Natural killer cell (primary cell): ENCODE measurements at regions of chr7 and their contacts with region 1.

Region 1: GRCh38 chr7:50632561-50633413 is 67.6 kb upstream of the DDC start:
- DNase-seq: peak; percentile 56 to 80
- ATAC-seq: peak; percentile 87 to 95 (median 92)
- H3K4me3 ChIP-seq: no peak overlapping the region
- H3K4me3 Mint-ChIP-seq: no peak overlapping the region
- H3K27ac ChIP-seq: no peak overlapping the region
- H3K27ac Mint-ChIP-seq: no peak overlapping the region
- H3K4me1 ChIP-seq: no peaks in the 10 kb centered on the region
- H3K4me1 Mint-ChIP-seq: no peaks in the 10 kb centered on the region
- H3K27me3 ChIP-seq: peaks cover 2% of the 10 kb centered on the region
- H3K27me3 Mint-ChIP-seq: peaks cover 24 to 31% of the 10 kb centered on the region in 2 donors
- CTCF ChIP-seq: peak; percentile 96

Region 2: GRCh38 chr7:50467817-50468610 is 164.8 kb before region 1 on chr7:
- intact Hi-C with region 1: loop called (anchors 1 kb)
- DNase-seq: peak; percentile 66 to 89
- ATAC-seq: peak; percentile 87 to 98 (median 97)
- H3K4me3 ChIP-seq: no peak overlapping the region
- H3K4me3 Mint-ChIP-seq: no peak overlapping the region
- H3K27ac ChIP-seq: no peak overlapping the region
- H3K27ac Mint-ChIP-seq: peak overlapping the region in 1 of 2 donors; percentile 42
- H3K4me1 ChIP-seq: peaks cover 9% of the 10 kb centered on the region
- H3K4me1 Mint-ChIP-seq: peaks cover 0 to 11% of the 10 kb centered on the region in 2 donors
- H3K27me3 ChIP-seq: no peaks in the 10 kb centered on the region
- H3K27me3 Mint-ChIP-seq: peaks cover 10 to 12% of the 10 kb centered on the region in 2 donors
- CTCF ChIP-seq: peak; percentile 85

Region 3: GRCh38 chr7:50595491-50596102 is 37.2 kb before region 1 on chr7:
- intact Hi-C with region 1: loop called (anchors 5 kb)
- DNase-seq: peak in 1 of 2 donors; percentile 55
- ATAC-seq: peak in 2 of 3 donors; percentile 40
- H3K4me3 ChIP-seq: no peak overlapping the region
- H3K4me3 Mint-ChIP-seq: no peak overlapping the region
- H3K27ac ChIP-seq: no peak overlapping the region
- H3K27ac Mint-ChIP-seq: no peak overlapping the region
- H3K4me1 ChIP-seq: no peaks in the 10 kb centered on the region
- H3K4me1 Mint-ChIP-seq: no peaks in the 10 kb centered on the region
- H3K27me3 ChIP-seq: no peaks in the 10 kb centered on the region
- H3K27me3 Mint-ChIP-seq: peaks cover 6 to 10% of the 10 kb centered on the region in 2 donors
- CTCF ChIP-seq: no peak